ENCODE measurements at regions of chr17 and their contacts with region 1.

Region 1: DNA sequence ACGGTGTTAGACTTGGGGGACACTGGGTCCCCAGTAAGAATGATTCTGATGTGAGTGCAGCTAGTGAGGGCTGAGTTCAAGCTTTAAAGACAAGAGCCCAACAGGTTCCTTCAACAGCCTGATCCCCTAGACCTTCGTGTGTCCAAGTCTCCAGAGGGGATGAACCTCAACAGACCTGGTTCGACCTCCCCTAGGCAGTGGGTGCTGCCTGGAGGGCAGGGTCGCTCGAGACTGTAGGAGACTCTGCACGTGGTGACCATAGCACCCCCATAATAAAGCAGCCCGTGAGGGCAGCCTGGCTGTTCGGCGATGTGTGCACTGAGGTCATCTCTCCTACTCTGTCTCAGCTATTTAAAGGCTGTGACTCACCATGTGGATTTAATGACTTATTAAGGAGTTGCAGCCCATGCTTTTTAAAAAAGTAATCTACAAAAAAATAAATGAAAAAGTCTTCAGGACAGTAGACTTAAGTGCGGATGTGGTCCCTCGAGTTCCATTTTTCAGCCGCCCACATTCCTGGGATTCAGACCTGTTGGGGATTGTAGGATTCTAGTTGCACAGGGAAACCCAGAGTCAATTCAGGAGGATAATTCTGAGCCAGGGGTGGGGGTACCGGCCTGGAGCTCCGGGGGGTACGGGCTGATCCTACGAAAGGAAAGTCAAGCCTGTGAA is 23.4 kb upstream of the METRNL start:
- DNase-seq: peak; percentile 41
- H3K4me3 ChIP-seq: no peak overlapping the region
- CTCF ChIP-seq: no peak

Region 2: DNA sequence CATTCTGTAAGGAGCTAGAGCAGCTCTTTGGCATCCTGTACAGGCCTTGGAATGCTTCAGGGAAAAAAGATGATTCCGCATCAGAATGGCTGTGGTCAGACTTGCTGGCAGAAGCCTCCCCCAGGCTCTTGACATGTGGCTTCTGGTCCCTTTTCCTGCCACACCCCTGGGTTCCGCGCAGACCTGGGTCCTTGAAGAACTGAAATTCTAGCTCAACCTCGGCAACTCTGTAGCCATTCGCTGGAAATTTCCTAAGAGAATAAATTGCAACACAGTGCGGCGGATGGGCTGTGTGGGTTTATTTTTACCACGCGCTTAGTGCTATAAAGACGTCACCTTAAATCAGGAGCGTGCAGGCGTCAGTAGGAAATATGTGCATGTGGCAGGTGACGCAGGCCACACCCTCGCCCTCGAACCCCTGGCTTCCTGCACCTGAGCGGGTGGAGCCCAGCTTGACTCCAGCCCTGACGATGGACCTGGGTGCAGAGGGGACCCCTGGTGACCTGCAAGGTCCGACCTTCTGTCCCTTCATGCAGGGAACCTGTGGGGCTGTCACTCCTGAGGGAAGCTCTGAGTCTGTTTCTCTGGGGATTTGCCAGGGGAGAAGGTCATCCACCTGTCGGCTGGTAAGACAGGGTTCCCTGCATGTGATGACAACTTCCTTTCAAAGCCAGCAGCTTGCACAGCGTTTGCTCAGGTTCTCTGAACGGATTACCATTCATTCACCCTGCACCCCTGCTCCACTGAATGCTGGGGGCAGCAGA is 69.6 kb after region 1 on chr17:
- in situ Hi-C with region 1: loop called (anchors 5 kb)
- DNase-seq: no peak
- H3K4me3 ChIP-seq: no peak overlapping the region
- CTCF ChIP-seq: no peak